Aorta (tissue), 5 donors: ENCODE measurements at regions of chr4 and their contacts with region 1.

Region 1: GRCh38 chr4:77044461-77045150 is 31.2 kb downstream of the CCNI start:
- DNase-seq: no peak
- ATAC-seq: peak; percentile 55
- H3K4me3 ChIP-seq: no peak overlapping the region
- H3K27ac ChIP-seq: peak overlapping the region in 1 of 2 donors; percentile 28
- H3K4me1 ChIP-seq: peaks cover 0 to 4% of the 10 kb centered on the region in 2 donors
- H3K27me3 ChIP-seq: no peaks in the 10 kb centered on the region

Region 2: DNA sequence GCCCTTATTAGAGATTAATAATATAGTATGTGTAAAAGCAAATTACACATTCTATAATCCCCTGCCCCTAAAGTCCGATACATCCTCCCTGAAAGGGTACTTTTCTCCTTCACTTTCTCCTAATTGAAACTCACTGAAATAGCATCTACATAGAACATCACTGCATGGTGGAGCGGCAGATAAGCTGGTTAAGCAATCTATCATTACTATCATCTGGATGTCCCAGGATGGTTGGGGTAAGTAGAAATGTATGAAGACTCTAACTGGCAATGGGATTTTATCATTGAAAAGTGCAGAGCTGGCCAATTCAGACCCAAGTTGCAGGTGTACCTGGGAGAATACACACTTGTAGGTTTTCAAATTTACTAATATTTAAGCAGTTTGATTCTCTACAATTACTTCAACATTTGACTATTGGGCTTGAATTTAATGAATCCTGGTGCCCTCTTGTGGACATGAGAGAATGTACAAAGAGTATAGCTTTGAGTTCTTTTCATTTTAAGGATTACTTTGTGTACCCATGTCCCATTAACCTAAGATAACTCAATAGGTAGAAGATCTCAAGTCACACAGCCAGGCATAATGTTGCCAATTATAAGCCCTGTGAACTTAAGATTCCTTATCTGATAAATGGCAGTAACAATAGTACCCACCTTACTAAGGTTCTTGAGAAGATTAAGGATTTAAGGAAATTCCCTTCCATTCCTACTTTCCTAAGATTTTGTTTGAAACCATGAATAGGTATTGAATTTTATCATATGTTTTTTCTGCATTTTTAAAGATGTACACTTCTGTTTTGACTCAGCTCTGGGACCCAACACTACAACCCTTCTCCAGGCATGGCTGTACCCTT is 539.8 kb before region 1 on chr4:
- intact Hi-C with region 1: loop called (anchors 10 kb)
- DNase-seq: no peak
- ATAC-seq: peak; percentile 68
- H3K4me3 ChIP-seq: no peak overlapping the region
- H3K27ac ChIP-seq: no peak overlapping the region
- H3K4me1 ChIP-seq: no peaks in the 10 kb centered on the region
- H3K27me3 ChIP-seq: no peaks in the 10 kb centered on the region

Region 3: GRCh38 chr4:76758290-76758882 is 286.2 kb before region 1 on chr4:
- intact Hi-C with region 1: loop called in 1 of 2 experiments (anchors 10 kb)
- DNase-seq: no peak
- ATAC-seq: peak; percentile 74
- H3K4me3 ChIP-seq: no peak overlapping the region
- H3K27ac ChIP-seq: peak overlapping the region in 1 of 2 donors; percentile 70
- H3K4me1 ChIP-seq: peaks cover 0 to 4% of the 10 kb centered on the region in 2 donors
- H3K27me3 ChIP-seq: no peaks in the 10 kb centered on the region

Region 4: DNA sequence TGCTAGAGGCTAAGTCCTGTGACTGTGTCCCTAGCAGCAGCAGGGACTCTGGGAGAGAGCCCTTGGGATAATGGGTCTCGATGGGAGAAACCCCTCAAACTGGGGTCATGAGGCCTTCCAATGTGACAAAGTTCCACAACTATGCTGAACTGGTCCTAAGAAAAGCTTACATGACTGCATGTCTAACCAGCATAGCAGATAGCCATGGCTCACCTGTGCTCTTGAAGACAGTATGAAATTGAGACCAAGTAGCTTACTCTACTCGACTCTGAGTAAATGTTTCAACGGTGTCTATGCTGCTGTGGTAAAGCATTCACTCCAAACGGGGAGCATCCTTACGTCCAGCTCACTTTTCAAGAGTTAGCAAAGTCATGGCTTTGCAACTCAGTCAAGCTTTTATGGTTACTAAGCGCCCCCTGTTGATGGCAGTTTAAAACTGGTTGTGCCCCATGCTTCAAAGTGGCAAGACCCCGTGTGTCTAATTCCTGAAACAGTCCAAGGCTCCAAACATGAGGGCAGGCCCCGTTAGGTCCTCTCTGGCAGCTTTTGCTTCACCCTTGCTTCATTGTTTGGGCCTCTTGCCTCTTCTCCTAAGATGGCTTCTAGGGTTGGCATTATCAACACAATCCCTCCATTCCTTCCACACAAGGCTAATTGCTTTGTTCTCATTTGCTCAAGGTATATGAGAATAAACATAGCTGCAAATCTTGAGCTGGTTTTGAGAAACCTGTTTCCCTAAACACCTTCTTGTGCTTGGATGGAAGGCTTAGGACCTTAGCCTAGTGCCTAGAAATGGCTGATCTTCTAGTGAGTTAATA is 159.0 kb after region 1 on chr4:
- intact Hi-C with region 1: loop called in 1 of 2 experiments (anchors 5 kb)
- DNase-seq: peak in 1 of 2 donors; percentile 59
- ATAC-seq: peak; percentile 68
- H3K4me3 ChIP-seq: no peak overlapping the region
- H3K27ac ChIP-seq: no peak overlapping the region
- H3K4me1 ChIP-seq: no peaks in the 10 kb centered on the region
- H3K27me3 ChIP-seq: no peaks in the 10 kb centered on the region